ENCODE measurements at regions of chr14 and their contacts with region 1.

Region 1: DNA sequence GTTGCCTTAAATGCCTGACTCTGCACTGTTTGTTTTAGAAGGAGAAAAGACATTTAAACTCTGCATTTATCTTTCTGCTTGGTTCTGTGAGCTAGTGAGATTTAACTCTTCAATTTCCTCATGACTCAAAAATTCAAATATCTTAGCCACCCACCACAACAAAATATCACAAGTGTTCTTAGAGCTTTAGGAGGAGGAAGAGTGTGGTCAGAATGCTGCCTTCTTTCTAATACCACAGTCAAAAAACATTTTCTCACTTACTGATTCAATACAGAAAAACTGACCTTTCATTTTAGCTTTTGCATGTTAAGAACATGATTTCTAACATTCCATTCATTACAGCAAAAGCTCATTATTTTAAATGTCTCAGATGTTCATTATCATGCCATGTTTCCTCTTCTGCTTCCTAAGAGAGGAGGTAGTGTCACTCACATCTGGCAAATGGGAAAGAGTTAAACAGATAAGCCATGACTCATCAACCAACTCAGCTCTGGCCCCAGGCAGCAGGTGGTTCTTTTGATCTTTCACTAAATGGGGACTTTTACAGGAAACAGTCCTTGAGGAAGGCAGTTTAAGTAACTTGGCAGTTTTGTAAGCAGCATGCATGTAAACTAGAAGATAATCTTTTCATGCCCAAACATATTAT is 56.4 kb upstream of the RNU6-8 start:
- DNase-seq: peak; percentile 19
- H3K4me3 Mint-ChIP-seq: no peak overlapping the region
- H3K27ac Mint-ChIP-seq: no peak overlapping the region
- H3K4me1 Mint-ChIP-seq: peaks cover 10% of the 10 kb centered on the region
- H3K27me3 Mint-ChIP-seq: no peaks in the 10 kb centered on the region

Region 2: DNA sequence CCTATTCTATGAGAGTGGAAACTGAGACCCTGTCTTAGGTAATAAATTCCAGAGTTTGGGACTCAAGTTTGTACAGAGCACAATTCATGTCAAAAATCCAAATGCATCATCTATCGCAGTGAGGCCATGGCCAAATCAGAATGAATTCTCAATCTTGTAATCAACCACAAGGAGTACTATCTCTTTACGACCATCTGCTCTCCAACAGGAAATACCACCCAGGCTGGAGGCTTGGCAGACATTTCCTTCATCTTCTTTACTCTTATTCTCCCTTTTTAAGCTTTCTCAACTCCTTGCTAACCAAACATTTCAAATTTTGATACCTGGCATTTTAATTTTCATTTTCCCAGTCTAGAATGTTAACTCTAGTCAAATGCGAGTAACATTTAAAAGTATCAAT is 90.3 kb before region 1 on chr14:
- CTCF ChIA-PET with region 1: no interaction called
- POLR2A ChIA-PET with region 1: no interaction called
- intact Hi-C with region 1: no loop called
- DNase-seq: no peak
- H3K4me3 Mint-ChIP-seq: no peak overlapping the region
- H3K27ac Mint-ChIP-seq: no peak overlapping the region
- H3K4me1 Mint-ChIP-seq: no peaks in the 10 kb centered on the region
- H3K27me3 Mint-ChIP-seq: no peaks in the 10 kb centered on the region

Region 3: DNA sequence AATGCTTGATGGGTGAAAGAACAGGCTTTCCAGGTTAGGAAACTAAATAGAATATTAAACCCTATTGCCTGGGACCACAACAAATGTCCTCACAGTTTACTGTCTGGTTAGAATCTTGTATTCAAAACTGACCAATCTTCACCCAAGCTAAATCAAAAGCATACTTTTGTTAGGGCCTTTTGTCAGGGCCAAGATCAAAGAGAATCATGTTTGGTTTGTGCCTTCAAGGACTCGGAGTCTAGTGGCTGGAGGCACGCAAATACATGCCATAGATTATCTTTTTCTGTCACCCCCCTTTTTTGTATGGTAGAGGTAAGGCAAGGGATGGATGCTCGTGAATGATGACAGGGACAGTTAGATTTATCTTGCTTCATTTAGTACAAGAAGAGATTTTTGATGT is 18.5 kb after region 1 on chr14:
- CTCF ChIA-PET with region 1: no interaction called
- POLR2A ChIA-PET with region 1: no interaction called
- intact Hi-C with region 1: no loop called
- DNase-seq: no peak
- H3K4me3 Mint-ChIP-seq: no peak overlapping the region
- H3K27ac Mint-ChIP-seq: no peak overlapping the region
- H3K4me1 Mint-ChIP-seq: no peaks in the 10 kb centered on the region
- H3K27me3 Mint-ChIP-seq: peaks cover 3% of the 10 kb centered on the region

Region 4: DNA sequence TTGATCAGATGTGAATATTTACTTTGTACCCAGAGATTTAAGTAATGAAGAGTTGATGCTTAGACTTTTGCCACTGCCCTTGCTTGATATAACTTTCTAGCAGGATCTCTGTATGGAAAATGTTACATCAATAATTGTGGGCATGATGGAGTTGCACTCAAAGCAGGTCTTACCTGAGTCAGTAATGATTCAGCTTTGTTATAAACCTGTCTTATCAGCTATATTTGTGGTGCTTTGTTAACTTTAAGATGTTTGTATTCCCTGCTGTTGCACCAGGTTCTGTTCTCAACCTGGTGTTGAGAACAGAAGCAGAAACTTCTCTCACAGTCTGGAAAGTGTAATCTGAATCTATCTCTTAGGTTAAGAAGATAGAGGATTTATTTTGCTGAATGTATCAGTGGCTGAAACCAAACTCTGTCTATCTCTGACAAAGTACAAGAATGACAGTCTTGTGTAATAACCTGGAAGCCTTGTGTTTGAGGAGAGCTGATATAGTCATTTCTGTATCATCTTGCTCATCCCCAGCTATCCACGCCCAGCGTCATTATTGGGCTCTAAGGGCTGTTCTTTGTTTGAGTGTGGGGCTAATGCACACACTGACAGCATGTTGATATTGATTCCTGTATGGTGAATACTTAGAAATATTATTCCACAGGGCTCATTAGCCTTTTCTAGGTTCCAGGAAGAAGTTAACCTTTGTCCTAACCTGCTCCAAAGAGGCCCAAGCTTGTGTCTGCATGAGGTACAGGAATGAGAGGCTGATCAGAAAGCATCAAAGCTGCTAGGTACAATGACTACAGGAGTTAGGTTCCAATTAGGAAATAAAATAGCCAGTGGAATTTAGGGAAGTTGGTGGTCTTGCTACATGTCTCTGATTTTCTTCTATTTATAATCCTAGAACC is 73.2 kb after region 1 on chr14:
- CTCF ChIA-PET with region 1: interaction called, 3 read pairs
- POLR2A ChIA-PET with region 1: no interaction called
- intact Hi-C with region 1: loop called (anchors 2 kb)
- DNase-seq: peak; percentile 49
- H3K4me3 Mint-ChIP-seq: no peak overlapping the region
- H3K27ac Mint-ChIP-seq: no peak overlapping the region
- H3K4me1 Mint-ChIP-seq: peaks cover 5% of the 10 kb centered on the region
- H3K27me3 Mint-ChIP-seq: no peaks in the 10 kb centered on the region